Left ventricle myocardium inferior (tissue), 1 donor: ENCODE measurements at regions of chr11 and their contacts with region 1.

Region 1: GRCh38 chr11:118051611-118052461 is 25.0 kb upstream of the TMPRSS4 start:
- DNase-seq: no peak
- H3K4me3 ChIP-seq: no peak overlapping the region
- H3K27ac ChIP-seq: no peak overlapping the region
- H3K4me1 ChIP-seq: no peaks in the 10 kb centered on the region
- H3K27me3 ChIP-seq: peaks cover 5% of the 10 kb centered on the region
- CTCF ChIP-seq: no peak

Region 2: DNA sequence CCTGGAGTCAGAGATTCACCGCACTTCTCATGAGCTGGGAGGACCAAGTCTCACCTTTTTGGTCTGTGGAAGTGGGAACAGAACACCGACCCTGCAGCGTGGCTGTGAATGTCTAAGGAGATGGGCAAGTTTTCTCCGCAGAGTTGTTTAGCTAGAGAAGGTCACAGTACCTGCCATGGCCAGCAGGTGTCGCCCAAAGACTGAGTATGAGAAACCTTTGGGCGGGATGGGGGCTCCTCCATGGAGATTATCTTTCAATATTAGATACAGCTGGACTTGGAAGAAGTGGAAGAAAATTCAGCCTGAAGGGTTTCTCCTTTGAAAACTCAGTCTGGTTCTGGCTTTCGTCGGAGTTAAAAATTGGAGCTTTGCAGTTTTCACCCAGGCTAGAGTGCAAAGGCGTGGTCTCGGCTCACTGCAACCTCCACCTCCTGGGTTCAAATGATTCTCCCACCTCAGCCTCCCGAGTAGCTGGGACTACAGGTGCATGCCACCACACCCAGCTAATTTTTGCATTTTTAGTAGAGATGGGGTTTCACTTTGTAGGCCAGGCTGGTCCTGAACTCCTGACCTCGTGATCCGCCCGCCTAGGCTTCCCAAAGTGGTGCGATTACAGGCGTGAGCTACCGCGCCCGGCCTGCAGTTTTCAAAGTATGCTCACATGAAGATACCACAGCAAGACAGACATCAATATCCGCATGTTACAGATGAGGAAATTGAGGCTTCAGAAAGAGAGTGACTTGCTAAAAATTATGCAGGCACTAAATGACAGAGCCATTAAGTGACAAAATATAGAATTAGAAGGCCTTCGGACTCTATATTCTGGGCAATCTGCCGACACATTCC is 244.1 kb before region 1 on chr11:
- intact Hi-C with region 1: loop called (anchors 10 kb)
- DNase-seq: peak; percentile 82
- H3K4me3 ChIP-seq: no peak overlapping the region
- H3K27ac ChIP-seq: no peak overlapping the region
- H3K4me1 ChIP-seq: peaks cover 21% of the 10 kb centered on the region
- H3K27me3 ChIP-seq: peaks cover 15% of the 10 kb centered on the region
- CTCF ChIP-seq: peak; percentile 94

Region 3: DNA sequence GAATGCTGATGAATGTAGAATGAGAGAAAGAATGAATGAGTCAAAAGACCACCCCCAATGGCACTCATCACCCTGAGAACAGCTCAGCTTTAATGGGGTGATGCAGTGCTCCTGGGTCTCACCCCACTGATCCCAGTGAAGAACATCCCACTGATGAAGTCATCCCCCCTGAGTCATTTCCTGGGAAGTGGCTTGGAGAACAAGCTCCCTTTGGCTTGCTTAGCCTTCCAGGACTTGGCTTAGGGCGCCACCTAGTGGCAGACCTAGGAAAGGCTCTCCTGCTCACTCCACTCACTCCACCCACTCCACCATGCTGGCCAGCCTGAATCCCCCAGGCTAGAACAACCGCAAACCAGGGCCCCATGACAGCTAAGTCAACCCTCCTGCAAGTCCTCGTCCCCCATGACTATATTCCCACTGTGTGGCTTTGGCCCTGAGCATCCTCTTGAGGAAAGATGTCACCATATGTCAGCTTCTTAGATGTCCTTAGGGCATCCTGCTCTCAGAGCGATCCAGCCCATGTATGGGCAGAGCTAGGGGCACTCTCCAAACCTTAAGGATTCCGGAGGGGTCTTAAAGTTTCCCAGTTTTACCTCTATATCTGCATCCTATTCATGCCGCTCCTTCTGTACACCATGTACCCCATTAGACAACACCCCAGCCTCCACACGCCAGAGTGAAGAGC is 104.9 kb before region 1 on chr11:
- intact Hi-C with region 1: loop called (anchors 5 kb)
- DNase-seq: peak; percentile 88
- H3K4me3 ChIP-seq: no peak overlapping the region
- H3K27ac ChIP-seq: no peak overlapping the region
- H3K4me1 ChIP-seq: peaks cover 12% of the 10 kb centered on the region
- H3K27me3 ChIP-seq: peaks cover 23% of the 10 kb centered on the region
- CTCF ChIP-seq: peak; percentile 98